Heart left ventricle (tissue), 16 donors: ENCODE measurements at regions of chr20 and their contacts with region 1.

Region 1: DNA sequence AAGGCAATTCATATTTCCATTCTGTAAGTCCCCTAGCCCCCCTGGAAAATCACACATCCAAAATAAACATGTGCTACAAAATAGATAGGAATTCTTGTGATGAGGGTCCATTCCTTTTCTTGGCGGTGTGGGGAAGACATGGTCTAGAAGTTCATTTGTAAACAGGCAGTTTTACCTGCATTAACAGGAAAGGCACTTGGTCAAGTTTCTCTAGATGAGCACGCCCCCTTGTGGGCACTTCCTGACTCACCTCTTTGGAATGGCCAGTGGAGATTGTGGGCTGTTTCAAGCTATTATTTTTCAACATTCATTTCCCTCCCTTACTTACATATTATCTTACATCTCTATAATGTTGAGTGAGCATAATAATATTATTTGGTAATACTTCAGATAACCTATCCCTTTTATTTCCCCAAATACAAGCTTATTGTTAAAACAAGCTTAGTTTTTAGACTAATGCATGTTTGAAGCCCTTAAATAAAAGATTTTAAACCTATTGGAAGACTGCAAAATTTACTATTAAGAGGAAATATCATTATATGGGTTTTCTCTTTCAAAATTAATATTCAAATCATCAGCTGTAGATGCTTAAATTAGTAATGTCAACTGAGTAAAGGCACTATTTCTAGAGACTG is 92.1 kb downstream of the TASP1 start:
- DNase-seq: peak; percentile 45 to 75 (median 58)
- ATAC-seq: peak in 3 of 4 donors; percentile 41 to 58 (median 49)
- H3K4me3 ChIP-seq: no peak overlapping the region
- H3K27ac ChIP-seq: no peak overlapping the region
- H3K4me1 ChIP-seq: peaks cover 0 to 3% (median 0%) of the 10 kb centered on the region in 12 donors
- H3K27me3 ChIP-seq: no peaks in the 10 kb centered on the region
- CTCF ChIP-seq: peak; percentile 70 to 86 (median 82)
- POLR2A ChIP-seq: no peak

Region 2: DNA sequence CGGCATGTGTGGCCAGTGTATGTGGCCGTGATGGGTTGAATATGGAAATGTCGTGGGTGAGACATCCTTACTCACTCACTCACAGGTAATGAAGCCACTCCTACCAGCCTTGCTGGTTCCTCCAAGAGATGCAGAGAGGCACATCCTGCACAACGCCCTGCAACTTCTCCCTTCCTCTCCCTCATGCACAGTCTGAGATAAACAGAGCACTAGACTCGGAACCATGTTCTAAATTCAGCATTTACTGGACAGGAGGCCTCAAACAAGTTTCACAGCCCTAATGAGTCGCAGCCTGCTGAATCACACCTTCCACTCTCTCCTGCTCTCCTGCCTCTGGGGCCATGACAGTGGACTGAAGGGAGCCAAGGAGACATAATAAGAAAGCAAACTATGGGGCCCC is 234.3 kb before region 1 on chr20:
- intact Hi-C with region 1: no loop called
- DNase-seq: no peak
- ATAC-seq: no peak
- H3K4me3 ChIP-seq: no peak overlapping the region
- H3K27ac ChIP-seq: no peak overlapping the region
- H3K4me1 ChIP-seq: no peaks in the 10 kb centered on the region
- H3K27me3 ChIP-seq: no peaks in the 10 kb centered on the region
- CTCF ChIP-seq: no peak
- POLR2A ChIP-seq: no peak

Region 3: GRCh38 chr20:13325033-13325432 is 221.6 kb before region 1 on chr20:
- intact Hi-C with region 1: loop called in 1 of 10 experiments (anchors 5 kb)
- DNase-seq: no peak
- ATAC-seq: no peak
- H3K4me3 ChIP-seq: no peak overlapping the region
- H3K27ac ChIP-seq: no peak overlapping the region
- H3K4me1 ChIP-seq: peaks cover 0 to 3% (median 0%) of the 10 kb centered on the region in 12 donors
- H3K27me3 ChIP-seq: no peaks in the 10 kb centered on the region
- CTCF ChIP-seq: peak in 11 of 12 donors; percentile 16 to 44 (median 24)
- POLR2A ChIP-seq: no peak

Region 4: DNA sequence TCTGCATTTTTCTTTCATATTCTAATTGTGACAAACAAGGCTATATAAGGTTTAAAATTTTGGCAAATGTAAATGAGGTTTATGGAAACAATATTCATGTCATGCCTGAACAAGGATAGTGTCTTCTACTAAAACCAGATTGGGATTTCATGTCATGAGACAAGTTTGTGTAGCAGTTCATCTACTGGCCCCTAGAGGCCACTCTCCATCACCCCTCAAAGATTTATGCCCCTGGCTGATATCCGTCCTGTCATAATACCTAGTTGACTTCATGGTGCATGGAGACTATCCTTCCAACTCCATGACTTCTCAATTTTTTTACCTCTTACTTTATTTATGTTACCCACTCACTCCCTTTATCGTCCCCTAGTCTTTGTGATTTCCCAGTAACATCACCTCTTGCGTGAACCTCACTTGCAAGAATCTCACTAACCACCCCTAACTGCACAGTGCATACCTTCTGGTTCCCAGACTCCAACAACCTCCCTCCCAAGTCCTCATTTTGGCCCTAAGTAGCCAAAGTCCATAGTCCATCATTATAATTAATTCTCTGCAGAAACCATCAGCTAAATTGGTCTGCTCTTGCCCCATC is 87.7 kb before region 1 on chr20:
- intact Hi-C with region 1: loop called in 3 of 10 experiments (anchors 2 to 5 kb)
- DNase-seq: no peak
- ATAC-seq: peak in 3 of 4 donors; percentile 45 to 72 (median 70)
- H3K4me3 ChIP-seq: no peak overlapping the region
- H3K27ac ChIP-seq: no peak overlapping the region
- H3K4me1 ChIP-seq: peaks cover 0 to 4% (median 0%) of the 10 kb centered on the region in 12 donors
- H3K27me3 ChIP-seq: no peaks in the 10 kb centered on the region
- CTCF ChIP-seq: peak; percentile 57 to 80 (median 68)
- POLR2A ChIP-seq: no peak

Region 5: GRCh38 chr20:13464702-13465101 is 81.9 kb before region 1 on chr20:
- intact Hi-C with region 1: loop called in 3 of 10 experiments (anchors 2 to 5 kb)
- DNase-seq: no peak
- ATAC-seq: no peak
- H3K4me3 ChIP-seq: no peak overlapping the region
- H3K27ac ChIP-seq: no peak overlapping the region
- H3K4me1 ChIP-seq: peaks cover 0 to 8% (median 0%) of the 10 kb centered on the region in 12 donors
- H3K27me3 ChIP-seq: no peaks in the 10 kb centered on the region
- CTCF ChIP-seq: no peak
- POLR2A ChIP-seq: no peak

Region 6: GRCh38 chr20:13486694-13487093 is 59.9 kb before region 1 on chr20:
- intact Hi-C with region 1: no loop called
- DNase-seq: no peak
- ATAC-seq: no peak
- H3K4me3 ChIP-seq: no peak overlapping the region
- H3K27ac ChIP-seq: no peak overlapping the region
- H3K4me1 ChIP-seq: peaks cover 0 to 12% (median 2%) of the 10 kb centered on the region in 12 donors
- H3K27me3 ChIP-seq: no peaks in the 10 kb centered on the region
- CTCF ChIP-seq: no peak
- POLR2A ChIP-seq: no peak

Region 7: DNA sequence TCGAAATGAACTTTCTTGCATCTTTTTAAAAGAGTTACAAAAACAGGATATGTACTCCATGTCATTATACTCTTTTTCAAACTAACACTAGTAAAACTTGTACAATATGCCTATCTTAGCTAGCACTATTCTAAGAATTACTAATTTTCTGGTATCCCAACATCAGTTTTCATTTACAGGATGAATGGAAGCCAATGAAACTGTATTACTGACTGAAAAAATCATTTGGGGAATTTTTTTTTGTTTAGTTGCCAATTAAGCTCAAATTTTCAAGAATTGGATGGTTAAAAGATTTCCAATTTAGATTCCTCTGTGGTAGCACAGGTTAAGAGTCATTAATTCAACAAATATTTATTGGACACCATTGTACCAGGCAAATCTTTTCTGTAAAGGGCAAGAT is 61.5 kb after region 1 on chr20:
- intact Hi-C with region 1: loop called in 1 of 10 experiments (anchors 2 kb)
- DNase-seq: no peak
- ATAC-seq: no peak
- H3K4me3 ChIP-seq: no peak overlapping the region
- H3K27ac ChIP-seq: no peak overlapping the region
- H3K4me1 ChIP-seq: no peaks in the 10 kb centered on the region
- H3K27me3 ChIP-seq: no peaks in the 10 kb centered on the region
- CTCF ChIP-seq: no peak
- POLR2A ChIP-seq: no peak

Region 8: GRCh38 chr20:13771853-13772453 is 225.3 kb after region 1 on chr20:
- intact Hi-C with region 1: loop called in 2 of 10 experiments (anchors 10 kb)
- DNase-seq: no peak
- ATAC-seq: no peak
- H3K4me3 ChIP-seq: no peak overlapping the region
- H3K27ac ChIP-seq: no peak overlapping the region
- H3K4me1 ChIP-seq: no peaks in the 10 kb centered on the region
- H3K27me3 ChIP-seq: no peaks in the 10 kb centered on the region
- CTCF ChIP-seq: peak; percentile 36 to 71 (median 56)
- POLR2A ChIP-seq: no peak